K562 (cell line): ENCODE measurements at regions of chr20 and their contacts with region 1.

Region 1: GRCh38 chr20:56400090-56400542 is 7.7 kb downstream of the CSTF1 start:
- DNase-seq: peak; percentile 48 to 86 (median 53)
- ATAC-seq: peak; percentile 92
- H3K4me3 ChIP-seq: no peak overlapping the region
- H3K27ac ChIP-seq: no peak overlapping the region
- H3K4me1 ChIP-seq: no peaks in the 10 kb centered on the region; a peak in 2 of 5 replicates
- H3K27me3 ChIP-seq: no peaks in the 10 kb centered on the region
- CTCF ChIP-seq: peak; percentile 60 to 75 (median 75)
- EP300 ChIP-seq: no peak
- POLR2A ChIP-seq: no peak
- RAD21 ChIP-seq: peak; percentile 66 to 84

Region 2: GRCh38 chr20:56453352-56453751 is 53.2 kb after region 1 on chr20:
- CTCF ChIA-PET with region 1: no interaction called
- POLR2A ChIA-PET with region 1: no interaction called
- in situ Hi-C with region 1: no loop called
- intact Hi-C with region 1: no loop called
- DNase-seq: no peak
- ATAC-seq: no peak
- H3K4me3 ChIP-seq: no peak overlapping the region
- H3K27ac ChIP-seq: no peak overlapping the region
- H3K4me1 ChIP-seq: peaks cover 1 to 3% of the 10 kb centered on the region in 2 experiments; a peak in 4 of 5 replicates
- H3K27me3 ChIP-seq: no peaks in the 10 kb centered on the region
- CTCF ChIP-seq: no peak
- EP300 ChIP-seq: no peak
- POLR2A ChIP-seq: no peak
- RAD21 ChIP-seq: no peak

Region 3: DNA sequence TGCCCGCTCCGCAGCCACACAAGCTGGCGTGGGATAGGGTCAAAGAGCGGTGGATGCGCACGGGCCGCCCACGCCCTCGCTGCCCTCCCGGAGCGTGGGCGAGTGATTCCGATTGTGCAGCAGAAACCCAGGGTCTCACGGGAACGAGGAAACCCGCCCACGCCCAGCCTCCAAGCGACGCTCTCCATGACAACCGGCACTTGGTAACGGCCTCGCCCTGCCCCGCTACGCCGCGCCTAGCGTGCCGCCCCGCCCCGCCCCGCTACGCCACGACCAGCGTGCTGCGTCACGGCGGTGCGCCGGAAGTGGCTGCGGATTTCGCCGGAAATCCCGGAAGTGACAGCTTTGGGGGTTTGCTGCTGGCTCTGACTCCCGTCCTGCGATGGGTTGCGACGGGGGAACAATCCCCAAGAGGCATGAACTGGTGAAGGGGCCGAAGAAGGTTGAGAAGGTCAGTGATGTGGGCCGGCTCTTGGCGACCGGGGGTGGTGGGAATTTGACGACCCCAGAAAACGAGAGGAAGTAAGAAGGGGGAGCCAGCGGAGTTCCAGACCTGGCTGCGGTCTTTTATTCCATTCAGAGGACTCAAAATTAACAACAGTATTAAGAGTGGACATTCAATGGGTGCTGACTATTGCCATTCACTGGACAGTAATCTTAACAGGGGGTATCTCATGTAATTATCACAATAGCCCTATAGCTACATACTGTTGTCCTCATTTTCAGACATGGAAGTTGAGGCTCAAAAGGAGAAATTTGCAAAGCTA is 68.4 kb after region 1 on chr20 and contains the start of gene RTF2:
- CTCF ChIA-PET with region 1: no interaction called
- POLR2A ChIA-PET with region 1: no interaction called
- in situ Hi-C with region 1: no loop called
- intact Hi-C with region 1: loop called (anchors 2 kb)
- DNase-seq: peak; percentile 93 to 98 (median 96)
- ATAC-seq: peak; percentile 99
- H3K4me3 ChIP-seq: peak within 1 kb of the TSS; percentile 88
- H3K27ac ChIP-seq: peak within 1 kb of the TSS; percentile 74
- H3K4me1 ChIP-seq: peaks cover 3 to 6% of the 10 kb centered on the region in 2 experiments; a peak in 4 of 5 replicates
- H3K27me3 ChIP-seq: no peaks in the 10 kb centered on the region
- CTCF ChIP-seq: no peak
- EP300 ChIP-seq: no peak
- POLR2A ChIP-seq: peak; percentile 86
- RAD21 ChIP-seq: no peak
- polyA plus RNA-seq, gene RTF2: 114 to 177 TPM

Region 4: DNA sequence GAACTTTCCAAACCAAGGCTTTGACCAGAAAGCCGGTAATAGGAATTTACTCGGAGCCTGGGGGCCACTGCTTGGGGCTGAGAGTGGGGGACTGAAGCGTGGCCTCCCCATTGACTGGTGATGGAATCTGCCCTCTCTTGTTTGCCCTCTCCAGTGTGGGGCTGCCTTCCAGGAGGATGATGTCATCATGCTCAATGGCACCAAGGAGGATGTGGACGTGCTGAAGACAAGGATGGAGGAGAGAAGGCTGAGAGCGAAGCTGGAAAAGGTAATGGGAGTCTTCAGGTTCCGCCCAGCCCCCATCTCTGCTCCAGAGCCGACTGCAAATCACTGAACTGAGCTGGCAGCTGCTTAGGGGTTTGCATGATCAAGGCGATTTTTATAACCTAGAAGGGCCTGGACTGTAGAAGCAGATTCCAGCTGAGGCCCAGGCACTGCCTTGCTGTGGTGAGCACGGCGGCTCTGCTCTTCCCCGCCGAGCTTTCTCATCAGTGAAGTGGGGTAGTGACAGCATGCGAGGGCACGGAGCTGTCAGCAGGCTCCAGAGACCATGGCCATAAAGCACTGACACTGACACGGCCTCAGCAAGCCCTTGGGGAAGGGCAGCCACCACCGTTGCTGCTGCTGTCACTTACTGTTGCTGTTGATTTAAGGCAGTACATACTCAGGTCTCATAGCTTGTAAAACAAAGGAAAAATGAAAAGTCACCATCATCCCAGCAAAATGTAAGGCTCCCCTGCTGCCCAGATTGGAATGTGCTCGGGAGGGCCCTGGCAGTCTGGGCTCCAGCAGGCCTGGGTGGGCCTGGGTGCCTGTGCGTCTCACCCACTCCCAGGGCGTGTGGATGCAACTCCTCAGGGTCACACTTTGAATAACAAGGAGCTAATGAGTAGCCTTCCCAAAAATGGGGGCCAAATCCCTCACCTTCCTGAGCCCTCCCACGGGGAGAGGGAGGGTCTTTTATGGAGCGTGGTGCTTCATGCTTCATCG is 113.3 kb after region 1 on chr20:
- CTCF ChIA-PET with region 1: no interaction called
- POLR2A ChIA-PET with region 1: no interaction called
- in situ Hi-C with region 1: no loop called
- intact Hi-C with region 1: loop called (anchors 5 kb)
- DNase-seq: no peak
- ATAC-seq: no peak
- H3K4me3 ChIP-seq: no peak overlapping the region
- H3K27ac ChIP-seq: no peak overlapping the region
- H3K4me1 ChIP-seq: 0 out of 5 replicates have a peak, but pooled peaks cover 0 to 3% of the 10 kb centered on the region in 2 experiments
- H3K27me3 ChIP-seq: no peaks in the 10 kb centered on the region
- CTCF ChIP-seq: no peak
- EP300 ChIP-seq: no peak
- POLR2A ChIP-seq: no peak
- RAD21 ChIP-seq: no peak